Right ventricle myocardium superior (tissue), 1 donor: ENCODE measurements at regions of chr14 and their contacts with region 1.

Region 1: GRCh38 chr14:50109342-50109741 is 7.0 kb downstream of the VCPKMT start:
- DNase-seq: no peak
- ATAC-seq: no peak

Region 2: DNA sequence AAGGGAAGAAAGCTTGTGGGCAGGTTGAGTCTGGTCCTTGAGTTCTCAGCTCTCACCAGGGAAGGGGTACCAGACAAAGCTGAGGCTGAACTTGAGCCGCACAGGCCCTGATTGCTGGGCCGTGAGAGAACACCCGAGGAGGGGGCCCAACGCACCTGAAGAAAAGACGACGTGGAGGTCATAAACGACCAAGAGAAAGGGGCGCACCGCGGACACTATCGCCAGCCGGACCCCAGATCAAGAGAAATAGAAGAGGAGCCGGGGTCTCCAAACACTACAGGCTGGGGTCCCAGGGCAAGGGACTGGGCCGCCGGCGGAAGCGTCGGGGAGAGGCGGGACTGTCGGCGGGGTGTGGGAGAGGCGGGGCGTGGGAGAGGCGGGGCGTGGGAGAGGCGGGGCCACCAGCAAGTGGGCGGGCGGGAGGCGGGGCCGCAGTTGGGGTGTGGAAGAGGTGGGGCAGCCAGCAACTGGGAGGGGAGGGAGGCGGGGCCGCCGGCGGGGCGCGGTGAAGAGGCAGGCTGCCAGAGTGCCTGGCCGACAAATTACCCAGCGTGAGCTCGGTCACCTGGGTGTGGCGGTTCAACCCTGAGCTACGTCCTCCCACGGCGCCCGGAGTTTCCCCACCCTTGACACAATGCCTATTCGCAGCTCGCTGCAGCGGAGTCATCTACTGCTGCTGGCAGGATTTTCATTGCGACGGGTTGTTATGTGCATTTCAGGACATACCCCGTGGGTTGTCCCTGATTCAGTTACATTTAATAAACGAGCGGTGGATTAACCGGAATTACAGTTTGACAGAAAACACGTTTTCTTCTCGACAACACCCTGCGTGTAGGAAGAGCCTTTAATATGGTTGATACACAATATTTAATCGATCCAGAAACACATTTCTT is 241.3 kb before region 1 on chr14:
- intact Hi-C with region 1: loop called (anchors 5 kb)
- DNase-seq: peak; percentile 98
- ATAC-seq: peak; percentile 98

Region 3: GRCh38 chr14:49971156-49972130 is 137.9 kb before region 1 on chr14:
- intact Hi-C with region 1: no loop called
- DNase-seq: no peak
- ATAC-seq: peak; percentile 47